ENCODE measurements at regions of chr2 and their contacts with region 1.

Region 1: GRCh38 chr2:100903534-100904288 is 83.8 kb downstream of the NPAS2 start:
- DNase-seq: no peak
- ATAC-seq: no peak
- H3K4me3 Mint-ChIP-seq: no peak overlapping the region
- H3K27ac Mint-ChIP-seq: no peak overlapping the region
- H3K4me1 Mint-ChIP-seq: peaks cover 18% of the 10 kb centered on the region
- H3K27me3 Mint-ChIP-seq: no peaks in the 10 kb centered on the region
- CTCF ChIP-seq: no peak

Region 2: GRCh38 chr2:100653449-100654035 is 250.2 kb before region 1 on chr2:
- CTCF ChIA-PET with region 1: no interaction called
- POLR2A ChIA-PET with region 1: no interaction called
- intact Hi-C with region 1: no loop called
- DNase-seq: peak; percentile 51
- ATAC-seq: peak; percentile 80
- H3K4me3 Mint-ChIP-seq: no peak overlapping the region
- H3K27ac Mint-ChIP-seq: no peak overlapping the region
- H3K4me1 Mint-ChIP-seq: peaks cover 39% of the 10 kb centered on the region
- H3K27me3 Mint-ChIP-seq: peaks cover 2% of the 10 kb centered on the region
- CTCF ChIP-seq: no peak

Region 3: GRCh38 chr2:100919316-100919875 is 15.7 kb after region 1 on chr2:
- CTCF ChIA-PET with region 1: interaction called, 12 read pairs
- POLR2A ChIA-PET with region 1: interaction called, 3 read pairs
- intact Hi-C with region 1: no loop called
- DNase-seq: peak; percentile 35
- ATAC-seq: peak; percentile 62
- H3K4me3 Mint-ChIP-seq: no peak overlapping the region
- H3K27ac Mint-ChIP-seq: no peak overlapping the region
- H3K4me1 Mint-ChIP-seq: no peaks in the 10 kb centered on the region
- H3K27me3 Mint-ChIP-seq: no peaks in the 10 kb centered on the region
- CTCF ChIP-seq: peak; percentile 76

Region 4: GRCh38 chr2:101089419-101089818 is 185.7 kb after region 1 on chr2:
- CTCF ChIA-PET with region 1: no interaction called
- POLR2A ChIA-PET with region 1: no interaction called
- intact Hi-C with region 1: no loop called
- DNase-seq: peak; percentile 29
- ATAC-seq: peak; percentile 94
- H3K4me3 Mint-ChIP-seq: no peak overlapping the region
- H3K27ac Mint-ChIP-seq: no peak overlapping the region
- H3K4me1 Mint-ChIP-seq: peaks cover 5% of the 10 kb centered on the region
- H3K27me3 Mint-ChIP-seq: peaks cover 3% of the 10 kb centered on the region
- CTCF ChIP-seq: no peak

Measured in activated CD8-positive, alpha-beta T cell treated with anti-CD3 and anti-CD28 coated beads for 36 hours (primary cell).